Caco-2 (cell line): ENCODE measurements at regions of chr5 and their contacts with region 1.

Region 1: DNA sequence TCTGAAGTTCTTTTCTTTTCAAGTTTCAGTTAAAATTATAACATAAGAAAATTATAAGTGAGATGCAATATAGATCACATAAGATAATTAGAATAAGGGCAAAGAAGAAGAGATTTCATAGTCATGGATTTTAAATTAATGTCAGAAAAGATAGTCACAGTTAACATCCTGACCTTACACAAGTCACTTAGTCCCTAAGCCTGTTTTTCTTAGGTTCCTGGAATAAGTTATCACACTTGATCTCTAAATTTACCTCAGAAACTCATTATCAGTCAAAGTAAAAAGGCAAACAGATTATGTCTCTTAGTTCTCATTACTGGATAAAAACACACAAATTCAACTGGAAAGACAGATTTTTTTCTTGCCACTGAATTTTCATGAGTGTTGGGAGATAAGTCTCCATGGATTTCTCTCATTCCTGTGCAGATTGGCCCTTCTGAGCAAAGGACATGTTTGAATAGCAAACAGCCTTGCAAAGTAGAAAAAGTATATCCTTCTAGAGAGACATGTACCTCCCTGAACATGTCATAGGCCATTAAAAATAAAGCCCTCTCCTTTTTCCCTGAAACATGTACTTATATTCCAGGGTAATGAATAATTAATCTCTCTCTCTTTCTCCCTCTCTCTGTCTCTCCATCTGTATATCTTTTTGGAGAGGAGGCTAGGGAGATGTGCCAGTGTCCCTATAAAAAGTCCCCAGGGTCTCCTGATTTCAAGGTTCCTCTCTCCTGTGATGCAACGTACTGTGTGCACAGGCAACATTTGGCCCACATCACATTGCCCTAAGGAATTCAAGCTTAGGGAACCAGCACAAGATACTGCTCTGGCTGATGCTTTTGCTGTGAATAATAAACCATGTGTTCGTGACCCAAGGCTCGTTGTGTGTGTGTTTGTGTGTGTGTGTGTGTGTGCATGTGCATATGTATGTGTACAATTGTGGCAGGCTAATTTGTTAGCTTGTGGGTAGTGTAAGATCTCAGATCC is 10.0 kb downstream of the SPATA9 start:
- DNase-seq: peak; percentile 69 to 73
- H3K4me3 ChIP-seq: no peak overlapping the region
- H3K4me3 Mint-ChIP-seq: peak overlapping the region; percentile 10
- H3K27ac Mint-ChIP-seq: peak overlapping the region; percentile 86
- H3K4me1 ChIP-seq: peaks cover 43% of the 10 kb centered on the region
- H3K4me1 Mint-ChIP-seq: peaks cover 35% of the 10 kb centered on the region
- H3K27me3 ChIP-seq: no peaks in the 10 kb centered on the region
- H3K27me3 Mint-ChIP-seq: no peaks in the 10 kb centered on the region
- CTCF ChIP-seq: no peak

Region 2: GRCh38 chr5:95530416-95530815 is 142.4 kb before region 1 on chr5:
- CTCF ChIA-PET with region 1: no interaction called
- POLR2A ChIA-PET with region 1: no interaction called
- intact Hi-C with region 1: no loop called
- DNase-seq: no peak
- H3K4me3 ChIP-seq: no peak overlapping the region
- H3K4me3 Mint-ChIP-seq: no peak overlapping the region
- H3K27ac Mint-ChIP-seq: no peak overlapping the region
- H3K4me1 ChIP-seq: 0 out of 2 replicates have a peak, but pooled peaks cover 4% of the 10 kb centered on the region
- H3K4me1 Mint-ChIP-seq: no peaks in the 10 kb centered on the region
- H3K27me3 ChIP-seq: no peaks in the 10 kb centered on the region
- H3K27me3 Mint-ChIP-seq: no peaks in the 10 kb centered on the region
- CTCF ChIP-seq: no peak

Region 3: GRCh38 chr5:95686651-95687050 is 13.9 kb after region 1 on chr5:
- CTCF ChIA-PET with region 1: no interaction called
- POLR2A ChIA-PET with region 1: no interaction called
- intact Hi-C with region 1: loop called (anchors 2 kb)
- DNase-seq: peak in 1 of 2 experiments; percentile 17
- H3K4me3 ChIP-seq: no peak overlapping the region
- H3K4me3 Mint-ChIP-seq: no peak overlapping the region
- H3K27ac Mint-ChIP-seq: no peak overlapping the region
- H3K4me1 ChIP-seq: no peaks in the 10 kb centered on the region; the same call in 1 of the 2 replicates
- H3K4me1 Mint-ChIP-seq: no peaks in the 10 kb centered on the region
- H3K27me3 ChIP-seq: no peaks in the 10 kb centered on the region
- H3K27me3 Mint-ChIP-seq: no peaks in the 10 kb centered on the region
- CTCF ChIP-seq: no peak

Region 4: GRCh38 chr5:95712347-95712958 is 39.7 kb after region 1 on chr5:
- CTCF ChIA-PET with region 1: no interaction called
- POLR2A ChIA-PET with region 1: no interaction called
- intact Hi-C with region 1: loop called (anchors 1 kb)
- DNase-seq: peak; percentile 83 to 95
- H3K4me3 ChIP-seq: no peak overlapping the region
- H3K4me3 Mint-ChIP-seq: peak overlapping the region; percentile 52
- H3K27ac Mint-ChIP-seq: peak overlapping the region; percentile 98
- H3K4me1 ChIP-seq: peaks cover 61% of the 10 kb centered on the region
- H3K4me1 Mint-ChIP-seq: peaks cover 46% of the 10 kb centered on the region
- H3K27me3 ChIP-seq: no peaks in the 10 kb centered on the region
- H3K27me3 Mint-ChIP-seq: no peaks in the 10 kb centered on the region
- CTCF ChIP-seq: no peak

Region 5: DNA sequence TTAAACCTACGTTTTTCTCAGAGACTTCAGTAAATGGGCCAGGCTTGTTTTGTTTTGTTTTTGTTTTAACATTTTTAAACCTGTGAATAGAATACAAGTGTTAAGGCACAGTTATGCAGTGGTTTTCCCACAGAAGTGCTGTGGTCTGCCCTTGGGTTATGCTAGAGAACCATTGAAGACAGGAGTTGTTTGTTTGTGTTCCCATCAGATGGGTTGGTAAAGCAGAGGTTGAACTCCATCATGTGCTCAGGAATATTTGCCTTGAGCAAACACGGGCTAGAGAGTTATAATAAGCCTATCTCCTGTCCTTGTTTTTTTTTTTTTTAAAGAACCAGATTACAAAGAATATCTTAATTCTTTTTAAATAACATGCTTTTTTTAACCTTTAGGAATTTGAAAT is 86.9 kb after region 1 on chr5:
- CTCF ChIA-PET with region 1: interaction called, 3 read pairs
- POLR2A ChIA-PET with region 1: no interaction called
- intact Hi-C with region 1: loop called (anchors 2 kb)
- DNase-seq: peak; percentile 49 to 56
- H3K4me3 ChIP-seq: no peak overlapping the region
- H3K4me3 Mint-ChIP-seq: no peak overlapping the region
- H3K27ac Mint-ChIP-seq: peak overlapping the region; percentile 67
- H3K4me1 ChIP-seq: peaks cover 30% of the 10 kb centered on the region
- H3K4me1 Mint-ChIP-seq: peaks cover 14% of the 10 kb centered on the region
- H3K27me3 ChIP-seq: no peaks in the 10 kb centered on the region
- H3K27me3 Mint-ChIP-seq: no peaks in the 10 kb centered on the region
- CTCF ChIP-seq: no peak